Activated T-helper 1 cell treated with anti-CD3 and anti-CD28 coated beads, Interleukin-12 subunit alpha, Interleukin-12 subunit beta, Interleukin-2, Interleukin-4 antibody, amounts not matched to agents 30 ng/mL and 10 ng/mL and 1 ng/mL, durations not matched to agents 14 hours and 24 hours and 36 hours (primary cell): ENCODE measurements at regions of chr3 and their contacts with region 1.

Region 1: DNA sequence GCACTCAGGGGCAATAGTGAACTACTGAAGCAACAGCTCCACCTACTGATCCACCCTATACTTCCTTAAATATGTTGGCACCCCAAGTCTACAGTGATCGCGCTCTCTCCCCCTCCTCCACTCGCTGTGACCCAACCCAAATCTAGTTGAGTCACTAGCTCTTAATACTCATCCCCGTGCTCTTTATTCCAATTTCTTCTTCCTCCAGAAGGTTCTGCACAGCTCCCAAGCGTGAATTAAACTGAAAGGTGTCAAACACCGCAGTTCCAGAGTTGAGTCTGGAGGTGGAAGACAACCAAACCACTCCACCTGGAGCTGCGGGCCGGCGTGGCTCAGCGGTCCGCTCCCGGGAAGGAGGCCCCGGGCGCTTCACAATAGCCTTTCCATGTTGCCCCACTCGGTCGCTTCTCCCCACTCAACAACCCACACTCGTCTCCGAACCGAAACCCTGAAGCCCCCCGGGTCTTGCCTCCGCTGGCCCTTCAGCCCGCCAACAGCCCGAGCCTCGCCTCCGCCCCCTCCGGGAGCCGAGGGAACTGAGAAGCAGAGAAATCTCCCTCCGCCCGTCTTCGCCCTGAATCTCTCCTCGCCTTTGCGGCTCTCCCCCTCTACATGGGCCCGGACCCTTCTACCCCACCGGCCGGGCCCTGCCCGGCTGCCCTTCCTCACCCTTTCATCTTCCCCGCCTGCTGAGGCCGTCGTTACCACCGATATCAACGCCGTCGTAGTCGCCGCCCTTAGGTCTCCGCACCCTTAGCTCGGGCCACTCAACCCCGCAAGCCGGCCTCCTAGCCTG is 578 bp downstream of the NAA50 start:
- DNase-seq: peak; percentile 70
- H3K4me3 Mint-ChIP-seq: peak overlapping the region; percentile 99
- H3K27ac Mint-ChIP-seq: peak overlapping the region; percentile 100
- H3K4me1 Mint-ChIP-seq: peaks cover 83% of the 10 kb centered on the region
- H3K27me3 Mint-ChIP-seq: peaks cover 4% of the 10 kb centered on the region

Region 2: GRCh38 chr3:113019182-113020137 is 726.0 kb before region 1 on chr3:
- intact Hi-C with region 1: loop called (anchors 2 kb)
- DNase-seq: peak; percentile 77
- H3K4me3 Mint-ChIP-seq: peak overlapping the region; percentile 91
- H3K27ac Mint-ChIP-seq: peak overlapping the region; percentile 89
- H3K4me1 Mint-ChIP-seq: peaks cover 58% of the 10 kb centered on the region
- H3K27me3 Mint-ChIP-seq: no peaks in the 10 kb centered on the region

Region 3: GRCh38 chr3:113514265-113514769 is 231.2 kb before region 1 on chr3:
- intact Hi-C with region 1: loop called (anchors 1 kb)
- DNase-seq: no peak
- H3K4me3 Mint-ChIP-seq: no peak overlapping the region
- H3K27ac Mint-ChIP-seq: no peak overlapping the region
- H3K4me1 Mint-ChIP-seq: peaks cover 7% of the 10 kb centered on the region
- H3K27me3 Mint-ChIP-seq: peaks cover 24% of the 10 kb centered on the region

Region 4: DNA sequence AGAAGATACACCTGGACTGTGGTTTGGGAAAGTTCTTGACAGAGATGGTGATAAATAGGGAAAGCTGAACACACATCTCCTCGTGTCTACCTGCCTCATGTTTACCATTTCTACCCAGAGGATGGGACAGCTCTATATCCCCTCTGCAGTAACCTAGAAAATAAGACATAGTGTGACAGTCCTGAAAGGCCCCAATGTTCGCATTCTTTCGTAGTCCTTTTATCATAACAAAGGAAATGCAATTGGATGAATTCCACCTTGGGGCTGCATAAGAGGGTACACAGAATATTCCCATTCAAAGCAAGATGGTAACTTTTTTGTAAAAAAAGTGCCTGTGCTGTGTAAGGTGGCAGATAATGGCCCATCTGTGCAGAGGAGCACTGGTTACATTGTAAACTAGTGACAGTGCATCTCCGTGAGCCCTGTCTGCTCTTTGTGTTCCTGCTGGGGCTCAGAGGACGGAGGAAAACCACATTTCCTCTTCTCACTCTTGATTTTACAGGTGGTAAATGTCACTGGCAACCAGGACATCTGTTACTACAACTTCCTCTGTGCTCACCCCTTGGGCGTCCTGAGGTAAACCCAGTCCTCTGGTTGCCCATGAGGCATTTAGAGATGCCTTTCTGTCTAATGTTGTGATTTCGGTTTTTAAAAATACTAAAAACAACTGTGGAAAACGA is 138.8 kb before region 1 on chr3:
- intact Hi-C with region 1: loop called (anchors 1 kb)
- DNase-seq: peak; percentile 47
- H3K4me3 Mint-ChIP-seq: no peak overlapping the region
- H3K27ac Mint-ChIP-seq: no peak overlapping the region
- H3K4me1 Mint-ChIP-seq: peaks cover 24% of the 10 kb centered on the region
- H3K27me3 Mint-ChIP-seq: no peaks in the 10 kb centered on the region

Region 5: GRCh38 chr3:113717818-113718217 is 27.7 kb before region 1 on chr3:
- intact Hi-C with region 1: no loop called
- DNase-seq: no peak
- H3K4me3 Mint-ChIP-seq: no peak overlapping the region
- H3K27ac Mint-ChIP-seq: peak overlapping the region; percentile 62
- H3K4me1 Mint-ChIP-seq: peaks cover 9% of the 10 kb centered on the region
- H3K27me3 Mint-ChIP-seq: no peaks in the 10 kb centered on the region

Region 6: DNA sequence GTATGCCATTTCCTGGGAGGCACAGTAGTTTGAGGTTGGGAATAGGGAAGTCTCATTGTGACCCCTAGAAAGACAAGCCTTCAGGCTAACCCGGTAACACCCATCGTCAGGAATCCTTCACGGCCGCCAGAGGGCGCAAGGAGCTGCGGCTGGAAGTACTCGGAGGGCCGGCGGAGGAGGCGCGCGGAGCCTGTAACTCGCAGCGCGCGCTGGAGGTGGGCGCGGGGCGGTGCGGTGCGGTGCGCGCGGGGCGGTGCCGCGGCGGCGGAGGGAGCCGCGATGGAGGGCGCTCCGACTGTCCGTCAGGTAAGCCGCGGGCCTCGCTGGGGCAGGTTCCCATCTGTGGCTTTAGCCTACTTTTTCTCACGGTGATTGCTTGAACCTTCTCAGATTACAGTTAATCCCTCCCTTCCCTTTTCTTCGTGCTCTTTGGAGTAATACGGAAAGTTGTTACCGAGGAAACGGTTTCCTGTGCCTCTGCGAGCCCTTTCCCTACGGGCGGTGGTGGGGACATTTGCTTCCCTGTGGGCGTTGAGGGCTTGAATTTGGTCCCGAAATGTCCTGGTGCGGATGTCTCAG is 93.2 kb after region 1 on chr3 and contains the start of gene GRAMD1C:
- intact Hi-C with region 1: loop called (anchors 2 kb)
- DNase-seq: peak; percentile 79
- H3K4me3 Mint-ChIP-seq: peak within 1 kb of the TSS; percentile 79
- H3K27ac Mint-ChIP-seq: no peak within 1 kb of the TSS
- H3K4me1 Mint-ChIP-seq: peaks cover 8% of the 10 kb centered on the region
- H3K27me3 Mint-ChIP-seq: peaks cover 12% of the 10 kb centered on the region
- total RNA-seq, gene GRAMD1C: 0.05 TPM in 1 of 2 replicates, not detected in the other

Region 7: DNA sequence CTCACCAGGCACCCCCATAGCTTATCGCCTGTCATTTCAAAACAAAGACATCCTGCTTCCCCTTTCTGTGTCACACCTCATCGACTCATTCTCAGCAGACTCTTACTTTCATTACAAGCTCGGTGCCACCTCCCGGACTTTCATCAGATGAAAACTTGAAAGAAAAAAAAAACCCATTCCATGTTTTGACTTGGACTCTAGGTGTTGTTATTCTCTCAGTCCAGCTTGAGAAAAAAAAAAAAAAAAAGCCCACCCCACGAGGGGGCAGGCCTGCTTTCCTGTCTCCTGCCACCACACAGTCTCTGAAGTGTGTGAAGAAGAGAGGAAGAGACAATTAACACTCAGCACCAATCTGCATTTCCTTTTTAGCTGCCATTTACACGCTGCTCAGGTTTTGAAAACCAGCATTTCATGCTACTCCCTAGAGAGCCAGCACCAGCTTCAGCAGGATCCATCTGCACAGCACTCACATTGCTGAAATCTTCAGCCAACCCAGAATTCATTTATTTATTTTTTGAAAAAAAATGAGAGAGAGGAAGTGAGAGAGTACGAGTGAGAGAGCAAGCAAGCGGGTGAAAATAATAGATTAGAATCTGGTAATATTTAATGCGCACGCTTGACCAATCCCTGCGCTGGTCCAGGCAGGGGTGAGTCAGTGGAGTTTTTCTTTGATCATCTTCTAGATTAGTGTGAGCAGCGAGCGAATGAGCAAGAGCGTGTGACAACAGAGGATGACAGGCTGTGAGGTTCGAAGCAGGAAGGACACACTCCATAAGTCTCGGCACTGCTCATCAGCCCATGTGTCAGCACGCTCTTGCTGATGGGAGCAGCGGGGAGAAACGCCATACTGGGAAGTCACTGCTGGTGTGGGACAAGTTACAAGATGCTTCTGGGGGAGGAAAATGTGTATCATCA is 468.4 kb after region 1 on chr3:
- intact Hi-C with region 1: loop called (anchors 2 kb)
- DNase-seq: peak; percentile 57
- H3K4me3 Mint-ChIP-seq: no peak overlapping the region
- H3K27ac Mint-ChIP-seq: no peak overlapping the region
- H3K4me1 Mint-ChIP-seq: no peaks in the 10 kb centered on the region
- H3K27me3 Mint-ChIP-seq: no peaks in the 10 kb centered on the region

Region 8: GRCh38 chr3:115147329-115148141 is 1402.1 kb after region 1 on chr3:
- intact Hi-C with region 1: loop called (anchors 1 kb)
- DNase-seq: peak; percentile 96
- H3K4me3 Mint-ChIP-seq: peak overlapping the region; percentile 96
- H3K27ac Mint-ChIP-seq: peak overlapping the region; percentile 98
- H3K4me1 Mint-ChIP-seq: peaks cover 16% of the 10 kb centered on the region
- H3K27me3 Mint-ChIP-seq: no peaks in the 10 kb centered on the region